ENCODE measurements at regions of chr16 and their contacts with region 1.

Region 1: GRCh38 chr16:25257956-25258823 is 545 bp upstream of the ZKSCAN2 start:
- DNase-seq: peak; percentile 83
- ATAC-seq: peak; percentile 56
- H3K4me3 Mint-ChIP-seq: peak overlapping the region; percentile 85
- H3K27ac Mint-ChIP-seq: peak overlapping the region; percentile 95
- H3K4me1 Mint-ChIP-seq: peaks cover 53% of the 10 kb centered on the region
- H3K27me3 Mint-ChIP-seq: no peaks in the 10 kb centered on the region

Region 2: DNA sequence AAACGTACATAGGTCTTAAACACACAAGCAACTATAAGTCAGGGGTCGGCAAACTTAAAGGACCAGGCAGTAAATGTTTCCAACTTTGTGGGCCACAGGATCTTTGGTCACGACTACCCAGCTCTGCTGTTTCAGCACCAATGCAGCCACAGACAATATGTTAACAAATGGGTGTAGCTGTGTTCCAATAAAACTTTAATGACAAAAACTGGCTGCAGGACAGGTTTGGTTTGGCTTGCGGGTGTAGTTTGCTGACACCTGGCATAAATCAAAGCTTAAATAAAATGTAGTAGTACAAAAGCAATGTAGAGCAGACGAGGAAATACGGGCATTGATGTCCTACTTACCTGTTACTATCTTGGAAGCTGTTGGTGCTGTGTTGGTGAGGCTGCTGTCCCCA is 327.8 kb before region 1 on chr16:
- CTCF ChIA-PET with region 1: no interaction called
- DNase-seq: no peak
- ATAC-seq: no peak
- H3K4me3 Mint-ChIP-seq: no peak overlapping the region
- H3K27ac Mint-ChIP-seq: no peak overlapping the region
- H3K4me1 Mint-ChIP-seq: no peaks in the 10 kb centered on the region
- H3K27me3 Mint-ChIP-seq: no peaks in the 10 kb centered on the region

Region 3: DNA sequence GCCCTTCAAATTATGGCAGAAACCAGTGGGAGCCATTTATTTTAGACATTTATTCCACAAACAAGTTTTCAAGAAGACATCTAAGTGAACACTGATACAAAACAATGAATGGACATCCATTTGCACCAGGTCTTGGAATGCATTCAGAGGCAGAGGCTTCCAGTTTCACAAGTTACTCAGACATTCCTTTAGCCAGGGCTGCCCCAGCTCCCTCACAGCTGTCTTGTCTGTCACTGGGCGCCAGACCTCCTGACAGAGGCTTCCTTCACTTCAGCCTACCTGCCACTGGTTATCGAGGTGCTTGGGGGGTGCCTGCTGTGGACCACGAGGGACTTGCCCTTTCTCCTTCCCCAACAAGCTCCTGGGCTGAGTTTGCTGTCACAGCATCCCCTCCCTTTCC is 22.2 kb before region 1 on chr16:
- CTCF ChIA-PET with region 1: interaction called, 21 read pairs
- DNase-seq: no peak
- ATAC-seq: no peak
- H3K4me3 Mint-ChIP-seq: no peak overlapping the region
- H3K27ac Mint-ChIP-seq: no peak overlapping the region
- H3K4me1 Mint-ChIP-seq: no peaks in the 10 kb centered on the region
- H3K27me3 Mint-ChIP-seq: no peaks in the 10 kb centered on the region